ENCODE measurements at regions of chr15 and their contacts with region 1.

Region 1: DNA sequence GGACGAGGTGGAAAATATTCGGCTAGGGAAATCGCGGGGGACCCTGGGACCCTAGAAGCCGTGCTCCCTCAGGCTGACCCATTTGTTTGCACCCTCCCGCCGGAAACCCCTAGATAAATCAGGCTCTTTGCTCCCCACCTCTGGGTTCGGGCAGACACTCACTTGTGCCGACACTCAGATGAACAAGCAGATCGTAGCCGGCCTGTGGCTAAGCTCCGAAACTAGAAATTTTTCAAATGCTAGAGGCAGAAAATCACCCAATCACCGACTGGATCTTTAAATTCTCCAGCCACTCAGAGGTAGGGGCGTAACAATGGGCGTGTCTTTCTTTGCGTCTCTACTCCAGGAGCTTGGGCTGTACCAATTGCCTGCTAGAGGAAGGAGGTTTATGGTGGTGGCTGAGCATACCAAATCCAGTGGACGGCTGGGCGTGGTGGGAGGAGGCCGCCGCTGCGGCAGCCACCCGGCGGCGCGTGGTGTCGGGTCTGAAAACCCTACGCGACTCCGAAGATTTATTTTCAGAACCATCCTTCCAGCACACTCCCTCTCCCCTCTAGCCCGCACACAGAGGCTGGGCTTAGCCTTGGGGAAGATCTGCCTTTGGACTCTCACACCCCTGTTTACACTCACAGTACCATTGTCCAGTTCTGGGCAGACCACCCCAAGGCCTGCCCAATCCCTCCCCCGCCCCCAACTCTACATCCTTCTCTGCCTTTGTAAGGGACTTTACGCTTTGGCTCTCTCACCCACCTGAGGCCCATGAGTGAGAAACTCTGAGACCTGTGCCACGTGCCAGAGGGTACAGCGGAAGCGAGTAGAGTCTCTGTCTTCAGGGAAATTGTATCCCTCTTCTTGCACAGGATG is at the start of gene PIF1:
- DNase-seq: peak; percentile 95
- H3K4me3 Mint-ChIP-seq: peak within 1 kb of the TSS; percentile 84
- H3K27ac Mint-ChIP-seq: peak within 1 kb of the TSS; percentile 81
- H3K4me1 Mint-ChIP-seq: peaks cover 20% of the 10 kb centered on the region
- H3K27me3 Mint-ChIP-seq: peaks cover 8% of the 10 kb centered on the region
- total RNA-seq, gene PIF1: 38.4 to 43.9 TPM

Region 2: GRCh38 chr15:64809649-64810496 is 15.8 kb before region 1 on chr15:
- CTCF ChIA-PET with region 1: interaction called, 22 read pairs
- intact Hi-C with region 1: no loop called
- DNase-seq: peak; percentile 86
- H3K4me3 Mint-ChIP-seq: no peak overlapping the region
- H3K27ac Mint-ChIP-seq: no peak overlapping the region
- H3K4me1 Mint-ChIP-seq: peaks cover 3% of the 10 kb centered on the region
- H3K27me3 Mint-ChIP-seq: no peaks in the 10 kb centered on the region

Region 3: DNA sequence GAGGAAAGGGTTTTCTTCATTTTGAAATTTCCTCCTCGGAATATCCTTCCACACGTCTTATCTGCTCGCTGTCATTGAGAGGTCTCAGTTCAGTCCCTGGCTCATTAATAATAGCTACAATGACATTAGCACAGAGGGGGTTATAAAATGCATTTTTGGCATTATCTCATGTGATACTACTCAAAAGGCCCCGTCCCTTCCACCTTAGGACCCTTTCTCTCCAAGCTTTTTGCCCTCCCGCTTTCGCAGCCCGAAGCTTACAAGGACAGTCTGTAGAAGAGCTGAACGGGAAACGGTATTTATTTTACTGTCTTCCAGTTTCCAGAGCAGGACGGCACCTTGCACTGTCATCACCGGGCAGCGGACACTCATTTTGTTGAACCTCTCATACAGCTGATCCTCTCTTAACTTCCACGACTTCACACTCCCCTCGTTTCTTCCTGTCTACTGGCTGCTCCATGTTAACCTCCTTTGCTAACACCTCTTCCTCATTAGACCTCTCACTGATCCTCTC is 10.4 kb after region 1 on chr15:
- CTCF ChIA-PET with region 1: interaction called, 8 read pairs
- intact Hi-C with region 1: loop called (anchors 1 kb)
- DNase-seq: no peak
- H3K4me3 Mint-ChIP-seq: peak overlapping the region; percentile 55
- H3K27ac Mint-ChIP-seq: peak overlapping the region; percentile 64
- H3K4me1 Mint-ChIP-seq: peaks cover 36% of the 10 kb centered on the region
- H3K27me3 Mint-ChIP-seq: no peaks in the 10 kb centered on the region

Region 4: DNA sequence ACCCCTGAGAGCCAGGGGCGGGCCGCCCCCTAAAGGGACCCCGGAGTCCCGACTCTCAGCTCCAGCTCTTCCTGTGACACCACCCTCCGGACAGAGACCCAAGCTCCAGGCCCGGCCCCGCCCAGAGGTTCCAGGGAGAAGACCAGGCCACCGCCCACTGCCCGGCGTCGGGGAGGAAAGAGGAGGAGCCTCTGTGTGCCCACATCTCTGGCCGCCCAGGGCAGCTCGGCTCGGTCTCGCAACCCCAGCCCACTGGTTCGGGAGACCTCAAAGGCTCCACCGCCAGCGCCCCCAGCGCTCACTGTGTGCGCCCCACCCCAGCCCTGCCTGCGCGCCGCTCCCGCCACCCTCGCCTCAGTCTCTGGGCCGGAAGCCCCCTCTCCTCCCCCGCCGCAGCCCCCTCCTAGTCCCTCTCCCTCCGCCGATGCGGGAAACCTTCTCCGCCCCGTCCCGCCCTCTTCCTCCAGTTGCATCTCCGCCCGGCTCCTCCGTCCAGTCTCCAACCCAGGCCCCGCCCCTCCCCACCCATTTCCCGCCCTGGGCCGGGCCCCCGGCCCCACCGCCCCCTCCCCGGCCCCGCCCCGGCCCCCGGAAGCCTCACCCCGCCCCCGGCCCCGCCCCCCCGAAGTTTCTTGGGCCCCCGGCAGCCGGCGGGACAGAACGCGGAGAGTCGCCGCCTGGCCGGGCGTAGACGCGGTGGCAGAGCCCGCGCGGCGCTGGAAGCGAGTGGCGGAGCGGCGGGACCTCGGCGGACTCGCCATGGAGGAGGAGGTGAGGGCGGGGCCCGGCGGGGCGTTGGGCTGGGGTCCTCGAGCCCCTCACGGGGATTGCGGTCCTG is 15.8 kb after region 1 on chr15 and contains the start of gene PLEKHO2:
- CTCF ChIA-PET with region 1: interaction called, 3 read pairs
- intact Hi-C with region 1: loop called (anchors 2 kb)
- DNase-seq: peak; percentile 95
- H3K4me3 Mint-ChIP-seq: peak within 1 kb of the TSS; percentile 96
- H3K27ac Mint-ChIP-seq: peak within 1 kb of the TSS; percentile 83
- H3K4me1 Mint-ChIP-seq: peaks cover 60% of the 10 kb centered on the region
- H3K27me3 Mint-ChIP-seq: no peaks in the 10 kb centered on the region
- total RNA-seq, gene PLEKHO2: 12.5 to 12.7 TPM

Region 5: DNA sequence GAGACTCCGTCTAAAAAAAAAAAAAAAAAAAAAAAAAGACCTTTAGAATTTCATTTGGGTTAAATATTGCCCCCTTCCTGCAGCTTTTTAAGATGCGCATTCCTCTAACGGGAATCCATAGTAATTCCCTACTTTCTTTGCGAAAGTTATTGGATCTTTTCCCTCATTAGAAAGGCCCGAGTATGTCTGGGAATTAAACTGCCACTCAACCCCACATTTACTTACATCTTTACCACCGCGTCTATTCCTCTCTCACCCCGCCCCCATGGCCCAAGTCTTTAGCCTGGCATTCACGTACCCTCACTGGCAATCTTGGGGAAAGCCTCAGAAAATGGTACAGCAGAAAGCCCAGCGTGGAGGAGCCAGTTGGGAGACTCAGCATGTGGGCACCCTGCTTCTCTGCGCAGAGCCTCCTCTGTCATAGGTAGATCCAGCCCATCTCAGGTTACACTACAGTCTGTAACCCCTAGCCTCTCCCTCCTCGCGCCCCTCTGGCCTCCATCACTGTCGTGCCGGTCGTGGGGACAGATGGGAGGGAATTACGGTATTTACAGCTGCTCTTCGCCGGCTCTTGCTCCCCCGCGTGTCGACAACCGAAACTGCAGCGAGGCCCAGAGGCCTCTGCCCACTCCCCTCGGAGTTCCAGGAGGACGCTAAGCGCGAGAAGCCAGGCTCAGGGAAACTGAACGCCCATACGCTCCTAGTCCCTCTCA is 79.6 kb after region 1 on chr15:
- CTCF ChIA-PET with region 1: no interaction called
- intact Hi-C with region 1: loop called (anchors 1 kb)
- DNase-seq: peak; percentile 89
- H3K4me3 Mint-ChIP-seq: peak overlapping the region; percentile 64
- H3K27ac Mint-ChIP-seq: peak overlapping the region; percentile 51
- H3K4me1 Mint-ChIP-seq: peaks cover 35% of the 10 kb centered on the region
- H3K27me3 Mint-ChIP-seq: no peaks in the 10 kb centered on the region

Measured in activated naive CD4-positive, alpha-beta T cell treated with anti-CD3 and anti-CD28 coated beads for 36 hours (primary cell).